ENCODE measurements at regions of chr3 and their contacts with region 1.

Region 1: DNA sequence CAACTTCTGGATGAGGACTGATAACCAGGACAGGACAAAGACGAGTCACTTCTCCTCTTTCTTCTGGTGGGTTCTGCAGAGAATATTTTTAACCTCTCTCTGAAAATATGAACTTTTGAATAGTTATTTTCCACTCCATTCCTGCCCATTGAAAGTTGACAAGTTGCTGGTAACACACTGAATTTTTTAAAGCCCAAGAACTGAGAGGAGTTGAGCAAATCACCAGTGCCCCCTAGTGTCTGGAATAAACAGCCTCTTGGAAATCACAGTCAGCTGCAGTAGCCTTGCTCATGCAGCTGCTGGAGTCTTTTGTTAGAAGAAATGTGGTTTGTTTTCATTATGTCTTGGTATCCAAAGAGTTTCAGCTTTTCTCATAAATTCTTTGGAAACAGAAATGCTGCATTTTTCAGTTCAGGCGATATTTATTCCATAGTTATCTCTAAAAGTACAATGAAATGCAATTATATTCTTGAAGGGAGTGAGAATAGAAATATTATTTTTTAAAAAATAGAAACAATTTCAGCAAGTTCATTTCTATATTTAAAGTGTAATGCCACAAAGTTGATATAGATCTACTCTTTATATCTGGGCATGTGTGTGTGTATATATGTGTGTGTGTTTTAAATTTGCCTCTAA is 741.0 kb upstream of the CBLB start:
- DNase-seq: peak in 1 of 2 donors; percentile 46
- ATAC-seq: peak; percentile 70 to 95 (median 86)
- H3K4me3 ChIP-seq: no peak overlapping the region
- H3K27ac ChIP-seq: no peak overlapping the region
- H3K4me1 ChIP-seq: peaks cover 7% of the 10 kb centered on the region
- H3K27me3 ChIP-seq: no peaks in the 10 kb centered on the region
- CTCF ChIP-seq: peak; percentile 95

Region 2: DNA sequence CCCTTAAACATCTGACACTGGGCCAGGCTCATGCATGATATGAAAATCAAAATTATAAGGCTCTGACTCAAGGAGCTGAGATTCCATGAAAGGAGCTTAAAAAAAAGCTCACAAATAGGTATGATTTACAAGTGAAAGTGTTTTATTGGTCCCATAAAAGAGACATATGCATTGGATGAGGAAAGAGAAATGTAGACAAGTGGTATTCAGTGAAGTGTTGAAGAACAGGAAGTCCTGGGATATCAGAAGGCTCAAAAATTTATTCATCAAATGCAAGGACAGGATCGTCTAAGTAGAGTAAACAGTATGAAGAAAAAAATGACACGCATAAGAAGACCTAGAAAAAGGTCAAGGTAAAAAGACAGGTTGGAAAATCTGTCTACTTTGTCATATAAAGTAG is 929.8 kb before region 1 on chr3:
- intact Hi-C with region 1: loop called in 1 of 2 experiments (anchors 5 kb)
- DNase-seq: no peak
- ATAC-seq: no peak
- H3K4me3 ChIP-seq: no peak overlapping the region
- H3K27ac ChIP-seq: no peak overlapping the region
- H3K4me1 ChIP-seq: no peaks in the 10 kb centered on the region
- H3K27me3 ChIP-seq: no peaks in the 10 kb centered on the region
- CTCF ChIP-seq: no peak

Region 3: DNA sequence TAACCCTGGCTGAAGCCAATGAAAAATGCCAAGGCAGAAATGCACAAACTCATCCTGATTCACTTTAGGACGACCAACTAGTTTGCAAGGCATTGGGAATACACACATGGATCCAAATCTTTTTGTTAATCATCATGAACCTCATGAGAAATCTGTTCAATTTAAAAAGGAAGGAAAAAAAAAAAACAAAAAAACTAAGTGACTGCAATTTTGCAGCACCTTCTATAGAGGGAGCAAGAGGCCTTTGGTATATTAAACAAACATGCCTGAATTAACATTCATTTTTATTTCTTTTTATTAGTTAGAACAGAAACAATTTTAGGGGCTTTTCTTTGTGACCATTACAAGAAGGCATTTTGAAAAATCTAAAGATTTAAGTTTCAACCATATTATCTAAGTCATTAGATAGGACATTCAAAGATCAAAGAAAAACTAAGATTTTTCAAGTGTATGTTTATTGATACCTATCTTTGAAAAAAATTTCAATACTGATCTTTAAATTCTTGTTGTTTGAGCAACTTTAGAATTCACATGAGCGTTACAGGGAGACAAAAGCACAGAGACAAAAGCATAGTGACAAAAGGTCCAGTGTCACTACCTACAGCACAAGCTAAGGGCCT is 923.4 kb before region 1 on chr3:
- intact Hi-C with region 1: loop called (anchors 2 to 5 kb)
- DNase-seq: no peak
- ATAC-seq: peak in 1 of 4 donors; percentile 67
- H3K4me3 ChIP-seq: no peak overlapping the region
- H3K27ac ChIP-seq: no peak overlapping the region
- H3K4me1 ChIP-seq: no peaks in the 10 kb centered on the region
- H3K27me3 ChIP-seq: no peaks in the 10 kb centered on the region
- CTCF ChIP-seq: peak; percentile 79

Region 4: GRCh38 chr3:105868742-105869530 is 740.8 kb before region 1 on chr3 and contains the start of gene CBLB:
- intact Hi-C with region 1: loop called in 1 of 2 experiments (anchors 5 kb)
- DNase-seq: peak; percentile 90 to 95
- ATAC-seq: peak; percentile 94 to 97 (median 96)
- H3K4me3 ChIP-seq: peak within 1 kb of the TSS; percentile 96
- H3K27ac ChIP-seq: peak within 1 kb of the TSS; percentile 93
- H3K4me1 ChIP-seq: peaks cover 40% of the 10 kb centered on the region
- H3K27me3 ChIP-seq: no peaks in the 10 kb centered on the region
- CTCF ChIP-seq: no peak
- total RNA-seq, gene CBLB: 12.1 to 18.2 (median 14.9) TPM